Naive thymus-derived CD4-positive, alpha-beta T cell (primary cell): ENCODE measurements at regions of chr3 and their contacts with region 1.

Region 1: DNA sequence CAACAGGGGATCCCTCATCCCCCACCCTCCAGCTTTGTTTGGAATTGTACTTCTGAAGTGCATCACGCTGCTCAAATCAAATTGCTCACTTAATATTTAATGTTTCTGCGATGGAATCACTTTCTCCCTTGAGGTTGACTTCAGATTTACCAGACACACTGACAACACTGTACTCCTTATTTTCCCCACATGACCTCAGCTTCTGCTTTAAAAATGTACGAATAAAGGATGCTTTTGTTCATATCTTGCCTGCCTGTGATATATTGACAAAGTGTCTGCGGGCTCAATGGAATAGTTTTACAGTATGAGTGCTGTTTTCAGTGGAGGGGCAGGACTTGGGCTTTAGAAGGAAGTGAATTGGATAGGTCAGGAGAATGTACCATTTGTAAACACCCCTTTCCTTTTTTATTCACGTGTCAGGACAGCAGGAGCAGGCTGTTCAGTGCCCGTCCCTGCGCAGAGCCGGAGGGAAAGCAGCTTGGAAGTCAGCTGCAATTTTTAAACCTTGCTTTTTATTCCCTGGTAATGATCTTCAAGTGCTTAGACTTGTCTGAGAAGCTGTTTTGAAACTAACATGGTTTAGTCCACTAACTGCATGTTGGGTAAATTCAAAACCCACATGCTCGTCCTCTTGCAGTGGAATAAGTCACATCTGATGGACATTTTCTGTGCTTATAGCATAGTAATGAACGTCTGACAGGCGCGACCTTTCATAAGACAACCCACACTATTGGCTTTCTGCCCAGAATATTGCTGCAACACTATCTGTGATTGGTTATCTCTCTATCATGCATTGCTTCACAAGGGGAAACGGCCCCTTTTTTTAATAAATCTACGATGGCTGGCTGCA is 29.9 kb downstream of the MBNL1 start:
- DNase-seq: peak in 8 of 9 donors; percentile 43 to 77 (median 72)
- ATAC-seq: peak; percentile 83
- H3K4me3 ChIP-seq: peak overlapping the region; percentile 45
- H3K4me3 Mint-ChIP-seq: peak overlapping the region; percentile 70 to 85 (median 76)
- H3K27ac ChIP-seq: peak overlapping the region; percentile 64
- H3K27ac Mint-ChIP-seq: peak overlapping the region; percentile 78 to 98 (median 89)
- H3K4me1 ChIP-seq: peaks cover 80% of the 10 kb centered on the region in 2 donors
- H3K4me1 Mint-ChIP-seq: peaks cover 55 to 95% (median 82%) of the 10 kb centered on the region in 7 donors
- H3K27me3 ChIP-seq: no peaks in the 10 kb centered on the region
- H3K27me3 Mint-ChIP-seq: no peaks in the 10 kb centered on the region

Region 2: DNA sequence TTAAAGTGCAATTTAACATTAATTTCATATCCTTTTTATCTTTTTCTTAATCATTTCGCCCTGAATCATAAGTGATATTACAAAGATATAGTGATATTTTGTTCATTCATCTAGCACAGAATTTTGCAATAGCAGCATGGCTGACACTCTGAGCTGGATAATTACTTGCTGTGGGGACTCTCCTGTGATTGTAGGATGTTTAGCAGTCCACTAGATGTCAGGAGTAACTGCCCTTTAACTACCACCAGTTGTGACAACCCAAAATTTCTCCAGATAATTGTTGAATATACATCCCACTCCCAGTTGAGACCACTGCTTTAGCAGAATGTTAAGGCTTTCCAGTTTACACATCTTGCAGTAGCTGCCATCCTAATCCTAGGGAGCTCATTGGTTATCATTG is 226.7 kb before region 1 on chr3:
- CTCF ChIA-PET with region 1: no interaction called
- POLR2A ChIA-PET with region 1: no interaction called
- intact Hi-C with region 1: loop called in 1 of 2 experiments (anchors 5 kb)
- DNase-seq: peak in 6 of 9 donors; percentile 10 to 43 (median 32)
- ATAC-seq: peak; percentile 75
- H3K4me3 ChIP-seq: no peak overlapping the region
- H3K4me3 Mint-ChIP-seq: no peak overlapping the region
- H3K27ac ChIP-seq: no peak overlapping the region
- H3K27ac Mint-ChIP-seq: no peak overlapping the region
- H3K4me1 ChIP-seq: peaks cover 0 to 5% of the 10 kb centered on the region in 2 donors
- H3K4me1 Mint-ChIP-seq: peaks cover 0 to 6% (median 3%) of the 10 kb centered on the region in 7 donors
- H3K27me3 ChIP-seq: no peaks in the 10 kb centered on the region
- H3K27me3 Mint-ChIP-seq: peaks cover 0 to 6% (median 0%) of the 10 kb centered on the region in 5 donors

Region 3: GRCh38 chr3:152281133-152281713 is 17.4 kb before region 1 on chr3:
- CTCF ChIA-PET with region 1: interaction called, 3 read pairs
- POLR2A ChIA-PET with region 1: interaction called, 17 read pairs
- intact Hi-C with region 1: loop called in 1 of 2 experiments (anchors 1 kb)
- DNase-seq: no peak
- ATAC-seq: peak; percentile 12
- H3K4me3 ChIP-seq: peak overlapping the region; percentile 18
- H3K4me3 Mint-ChIP-seq: peak overlapping the region; percentile 64 to 79 (median 72)
- H3K27ac ChIP-seq: peak overlapping the region; percentile 49
- H3K27ac Mint-ChIP-seq: peak overlapping the region; percentile 6 to 94 (median 73)
- H3K4me1 ChIP-seq: peaks cover 47 to 86% of the 10 kb centered on the region in 2 donors
- H3K4me1 Mint-ChIP-seq: peaks cover 55 to 95% (median 85%) of the 10 kb centered on the region in 7 donors
- H3K27me3 ChIP-seq: no peaks in the 10 kb centered on the region
- H3K27me3 Mint-ChIP-seq: no peaks in the 10 kb centered on the region

Region 4: GRCh38 chr3:152309535-152310307 is 11.1 kb after region 1 on chr3:
- CTCF ChIA-PET with region 1: no interaction called
- POLR2A ChIA-PET with region 1: interaction called, 5 read pairs
- intact Hi-C with region 1: loop called in 1 of 2 experiments (anchors 1 kb)
- DNase-seq: peak in 3 of 9 donors; percentile 14 to 31 (median 27)
- ATAC-seq: peak; percentile 69
- H3K4me3 ChIP-seq: no peak overlapping the region
- H3K4me3 Mint-ChIP-seq: peak overlapping the region in 8 of 10 donors; percentile 9 to 57 (median 30)
- H3K27ac ChIP-seq: peak overlapping the region; percentile 56
- H3K27ac Mint-ChIP-seq: peak overlapping the region; percentile 15 to 88 (median 66)
- H3K4me1 ChIP-seq: peaks cover 50 to 68% of the 10 kb centered on the region in 2 donors
- H3K4me1 Mint-ChIP-seq: peaks cover 31 to 89% (median 83%) of the 10 kb centered on the region in 7 donors
- H3K27me3 ChIP-seq: no peaks in the 10 kb centered on the region
- H3K27me3 Mint-ChIP-seq: no peaks in the 10 kb centered on the region

Region 5: GRCh38 chr3:152322756-152323155 is 24.1 kb after region 1 on chr3:
- CTCF ChIA-PET with region 1: no interaction called
- POLR2A ChIA-PET with region 1: interaction called, 3 read pairs
- intact Hi-C with region 1: loop called in 1 of 2 experiments (anchors 2 kb)
- DNase-seq: no peak
- ATAC-seq: peak; percentile 43
- H3K4me3 ChIP-seq: no peak overlapping the region
- H3K4me3 Mint-ChIP-seq: peak overlapping the region in 9 of 10 donors; percentile 17 to 78 (median 57)
- H3K27ac ChIP-seq: peak overlapping the region; percentile 11
- H3K27ac Mint-ChIP-seq: peak overlapping the region in 8 of 9 donors; percentile 3 to 77 (median 56)
- H3K4me1 ChIP-seq: peaks cover 46 to 60% of the 10 kb centered on the region in 2 donors
- H3K4me1 Mint-ChIP-seq: peaks cover 59 to 96% (median 92%) of the 10 kb centered on the region in 7 donors
- H3K27me3 ChIP-seq: no peaks in the 10 kb centered on the region
- H3K27me3 Mint-ChIP-seq: no peaks in the 10 kb centered on the region

Region 6: DNA sequence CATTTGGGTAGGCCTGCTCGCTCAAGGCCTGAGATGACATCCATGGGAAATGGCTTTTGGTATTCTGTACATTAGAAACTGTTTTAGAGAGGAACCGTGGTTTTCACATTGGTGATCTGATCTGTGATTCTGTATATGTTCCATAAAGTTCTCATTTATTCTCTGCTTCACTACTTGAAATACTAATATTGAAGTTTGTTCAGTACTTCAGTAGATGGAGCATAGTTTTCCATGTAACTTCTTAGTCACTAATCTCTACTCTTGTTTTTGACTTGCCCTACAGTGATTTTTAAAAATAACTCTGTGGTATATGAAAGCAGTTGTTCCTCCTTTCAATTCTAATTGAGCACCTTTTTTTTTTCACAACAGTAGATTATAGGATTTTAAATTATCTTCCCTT is 36.7 kb after region 1 on chr3:
- CTCF ChIA-PET with region 1: no interaction called
- POLR2A ChIA-PET with region 1: no interaction called
- intact Hi-C with region 1: loop called in 1 of 2 experiments (anchors 5 kb)
- DNase-seq: no peak
- ATAC-seq: no peak
- H3K4me3 ChIP-seq: no peak overlapping the region
- H3K4me3 Mint-ChIP-seq: peak overlapping the region in 8 of 10 donors; percentile 1 to 74 (median 44)
- H3K27ac ChIP-seq: peak overlapping the region; percentile 38
- H3K27ac Mint-ChIP-seq: peak overlapping the region in 8 of 9 donors; percentile 48 to 86 (median 68)
- H3K4me1 ChIP-seq: peaks cover 49 to 51% of the 10 kb centered on the region in 2 donors
- H3K4me1 Mint-ChIP-seq: peaks cover 55 to 100% (median 93%) of the 10 kb centered on the region in 7 donors
- H3K27me3 ChIP-seq: no peaks in the 10 kb centered on the region
- H3K27me3 Mint-ChIP-seq: no peaks in the 10 kb centered on the region

Region 7: DNA sequence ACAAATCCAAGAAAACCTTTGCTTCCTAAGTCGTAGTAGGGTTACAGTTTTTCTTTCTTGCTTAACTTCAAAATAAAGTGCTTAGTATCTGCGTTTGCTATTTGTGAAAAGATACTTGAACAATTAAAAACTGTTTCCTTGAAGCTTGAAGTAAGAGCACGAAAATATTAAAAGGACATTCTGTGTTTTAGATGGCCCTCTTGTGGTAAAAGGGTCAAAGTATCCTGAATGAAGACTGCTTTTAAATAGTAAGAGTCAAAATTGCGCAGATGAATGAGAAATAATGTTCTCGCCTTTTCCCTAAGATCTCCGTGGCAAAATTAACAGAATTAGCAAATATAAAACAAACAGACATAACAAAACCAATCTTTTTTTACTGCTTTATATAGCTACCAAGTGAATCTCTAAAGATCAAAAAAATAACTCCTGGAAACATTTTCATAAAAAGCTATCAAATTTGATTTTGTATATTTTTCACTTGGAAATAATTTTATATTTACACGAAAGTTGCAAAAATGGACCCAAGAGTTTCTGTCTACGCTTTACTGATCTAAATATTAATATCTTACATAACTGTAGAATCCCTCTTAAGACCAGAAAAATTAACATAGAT is 145.5 kb after region 1 on chr3:
- CTCF ChIA-PET with region 1: no interaction called
- POLR2A ChIA-PET with region 1: no interaction called
- intact Hi-C with region 1: loop called in 1 of 2 experiments (anchors 5 kb)
- DNase-seq: peak in 5 of 9 donors; percentile 31 to 42 (median 36)
- ATAC-seq: peak; percentile 60
- H3K4me3 ChIP-seq: no peak overlapping the region
- H3K4me3 Mint-ChIP-seq: peak overlapping the region in 6 of 10 donors; percentile 0 to 45 (median 26)
- H3K27ac ChIP-seq: peak overlapping the region; percentile 50
- H3K27ac Mint-ChIP-seq: peak overlapping the region; percentile 2 to 68 (median 56)
- H3K4me1 ChIP-seq: peaks cover 24 to 27% of the 10 kb centered on the region in 2 donors
- H3K4me1 Mint-ChIP-seq: peaks cover 49 to 90% (median 78%) of the 10 kb centered on the region in 7 donors
- H3K27me3 ChIP-seq: no peaks in the 10 kb centered on the region
- H3K27me3 Mint-ChIP-seq: no peaks in the 10 kb centered on the region